Naive thymus-derived CD8-positive, alpha-beta T cell (primary cell): ENCODE measurements at regions of chr16 and their contacts with region 1.

Region 1: DNA sequence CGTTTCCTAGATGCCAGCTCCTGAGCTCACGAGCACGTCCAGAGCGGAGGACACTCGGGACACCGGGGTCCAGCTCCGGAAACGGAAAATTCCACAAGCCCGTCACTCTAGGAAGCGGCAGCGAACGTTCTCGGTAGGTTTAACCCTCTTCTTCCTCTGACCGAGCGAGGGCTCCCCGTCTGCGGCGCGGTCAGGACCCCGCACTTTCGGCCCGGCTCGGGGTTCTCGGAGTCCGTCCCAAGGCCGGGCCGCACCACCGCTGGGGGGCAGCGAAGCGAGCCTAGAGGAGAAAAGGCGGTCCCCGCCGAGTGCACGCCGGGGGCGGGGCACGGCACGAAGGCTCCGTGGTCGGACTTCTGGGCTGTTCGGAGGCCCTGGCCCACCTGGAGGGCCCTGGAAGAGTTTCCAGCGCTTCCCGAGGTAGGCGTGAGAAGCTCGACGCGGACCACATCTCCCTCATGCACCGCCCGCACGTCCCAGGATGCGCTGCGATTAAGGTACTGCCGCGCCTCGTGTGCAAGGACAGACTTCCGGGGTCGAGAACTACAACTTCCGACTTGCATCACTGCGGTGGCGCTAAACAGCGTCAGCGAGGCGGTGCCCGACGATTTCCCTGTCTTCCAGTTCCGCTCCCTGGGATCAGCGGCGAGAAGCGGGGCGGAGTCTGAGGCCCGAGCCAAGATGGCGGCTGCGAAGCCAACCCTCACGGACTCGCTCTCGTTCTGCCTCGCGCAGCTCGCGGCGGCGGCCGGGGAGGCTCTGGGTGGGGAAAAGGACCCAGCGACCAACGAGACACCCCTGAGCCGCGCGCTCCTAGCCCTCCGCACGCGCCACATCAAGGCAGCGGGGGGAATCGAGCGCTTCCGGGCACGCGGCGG is at the start of gene ARMC5:
- DNase-seq: peak; percentile 90 to 99 (median 96)
- ATAC-seq: peak; percentile 71 to 76
- H3K4me3 Mint-ChIP-seq: peak within 1 kb of the TSS; percentile 90 to 97 (median 93)
- H3K27ac Mint-ChIP-seq: peak within 1 kb of the TSS; percentile 92 to 100 (median 98)
- H3K4me1 Mint-ChIP-seq: peaks cover 16 to 54% (median 42%) of the 10 kb centered on the region in 4 donors
- H3K27me3 Mint-ChIP-seq: no peaks in the 10 kb centered on the region
- polyA plus RNA-seq, gene ARMC5: 6.2 to 9.8 (median 8.0) TPM

Region 2: DNA sequence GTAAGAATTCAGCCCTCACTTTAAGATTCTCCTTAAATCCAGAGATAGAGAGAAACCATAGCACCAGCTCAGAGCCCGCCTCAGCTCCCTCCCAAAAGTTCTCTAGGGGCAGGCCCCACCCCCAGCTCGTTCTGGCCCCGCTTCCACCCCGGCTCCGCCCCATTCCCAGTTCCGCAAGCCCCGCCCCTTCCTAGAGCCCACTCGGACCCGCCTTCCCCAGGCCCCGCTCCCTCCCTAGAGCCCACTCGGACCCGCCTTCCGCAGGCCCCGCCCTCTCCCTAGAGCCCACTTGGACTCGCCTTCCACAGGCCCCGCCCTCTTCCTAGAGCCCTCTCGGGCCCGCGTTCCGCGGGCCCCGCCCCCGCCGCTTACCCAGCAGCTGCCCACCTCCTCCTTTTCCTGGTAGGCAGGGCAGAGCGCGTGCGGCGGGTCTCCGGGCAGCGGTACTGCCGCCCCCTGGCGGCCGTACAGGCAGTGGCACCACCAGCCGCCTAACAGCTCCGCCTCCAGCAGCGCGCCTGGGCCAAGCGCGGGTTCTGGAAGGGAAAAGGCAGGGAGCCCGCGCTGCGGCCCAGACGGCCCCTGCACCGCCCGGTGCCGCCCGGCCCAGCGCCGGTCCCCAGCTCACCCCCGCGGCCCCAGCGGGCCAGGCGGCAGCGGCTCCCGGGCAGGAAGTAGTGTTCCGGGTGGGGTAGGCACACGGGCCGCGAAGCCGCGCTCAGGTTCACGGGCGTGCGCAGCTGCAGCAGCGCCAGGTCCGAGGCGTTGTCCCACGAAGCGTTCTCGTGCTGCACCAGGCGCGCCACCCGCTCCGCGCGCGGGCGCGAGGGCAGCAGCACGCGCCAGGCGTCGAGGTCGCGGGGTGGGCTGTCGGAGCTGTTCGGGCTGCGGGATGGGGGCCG is 316.7 kb before region 1 on chr16:
- POLR2A ChIA-PET with region 1: interaction called, 19 read pairs
- DNase-seq: peak; percentile 92 to 99 (median 96)
- ATAC-seq: peak; percentile 85 to 87
- H3K4me3 Mint-ChIP-seq: peak overlapping the region; percentile 52 to 82 (median 68)
- H3K27ac Mint-ChIP-seq: peak overlapping the region; percentile 8 to 95 (median 90)
- H3K4me1 Mint-ChIP-seq: peaks cover 10 to 18% (median 15%) of the 10 kb centered on the region in 4 donors
- H3K27me3 Mint-ChIP-seq: peaks cover 0 to under 1% (median 0%) of the 10 kb centered on the region in 5 donors

Region 3: DNA sequence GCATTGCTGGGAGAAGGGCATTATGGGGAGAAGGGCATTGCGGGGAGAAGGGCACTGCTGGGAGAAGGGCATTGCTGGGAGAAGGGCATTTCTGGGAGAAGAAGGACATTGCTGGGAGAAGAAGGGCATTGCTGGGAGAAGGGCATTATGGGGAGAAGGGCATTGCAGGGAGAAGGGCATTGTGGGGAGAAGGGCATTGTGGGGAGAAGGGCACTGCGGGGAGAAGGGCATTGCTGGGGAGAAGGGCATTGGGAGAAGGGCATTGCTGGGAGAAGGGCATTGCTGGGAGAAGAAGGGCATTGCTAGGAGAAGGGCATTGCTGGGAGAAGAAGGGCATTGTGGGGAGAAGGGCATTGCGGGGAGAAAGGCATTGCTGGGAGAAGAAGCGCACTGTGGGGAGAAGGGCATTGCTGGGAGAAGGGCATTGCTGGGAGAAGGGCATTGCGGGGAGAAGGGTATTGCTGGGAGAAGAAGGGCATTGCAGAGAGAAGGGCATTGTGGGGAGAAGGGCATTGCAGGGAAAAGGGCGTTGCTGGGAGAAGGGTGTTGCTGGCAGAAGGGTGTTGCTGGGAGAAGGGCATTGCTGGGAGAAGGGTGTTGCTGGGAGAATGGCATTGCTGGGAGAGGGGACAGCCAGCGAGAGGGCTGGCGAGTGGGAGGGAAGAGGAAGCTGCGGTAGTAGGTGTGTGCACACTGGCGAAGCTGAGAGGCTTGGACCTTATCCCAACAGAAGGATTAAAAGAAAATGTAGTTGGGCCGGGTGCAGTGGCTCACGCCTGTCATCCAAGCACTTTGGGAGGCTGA is 237.5 kb before region 1 on chr16:
- POLR2A ChIA-PET with region 1: no interaction called
- DNase-seq: no peak
- ATAC-seq: no peak
- H3K4me3 Mint-ChIP-seq: no peak overlapping the region
- H3K27ac Mint-ChIP-seq: no peak overlapping the region
- H3K4me1 Mint-ChIP-seq: peaks cover 5 to 9% (median 7%) of the 10 kb centered on the region in 4 donors
- H3K27me3 Mint-ChIP-seq: peaks cover 5 to 42% (median 21%) of the 10 kb centered on the region in 5 donors

Region 4: DNA sequence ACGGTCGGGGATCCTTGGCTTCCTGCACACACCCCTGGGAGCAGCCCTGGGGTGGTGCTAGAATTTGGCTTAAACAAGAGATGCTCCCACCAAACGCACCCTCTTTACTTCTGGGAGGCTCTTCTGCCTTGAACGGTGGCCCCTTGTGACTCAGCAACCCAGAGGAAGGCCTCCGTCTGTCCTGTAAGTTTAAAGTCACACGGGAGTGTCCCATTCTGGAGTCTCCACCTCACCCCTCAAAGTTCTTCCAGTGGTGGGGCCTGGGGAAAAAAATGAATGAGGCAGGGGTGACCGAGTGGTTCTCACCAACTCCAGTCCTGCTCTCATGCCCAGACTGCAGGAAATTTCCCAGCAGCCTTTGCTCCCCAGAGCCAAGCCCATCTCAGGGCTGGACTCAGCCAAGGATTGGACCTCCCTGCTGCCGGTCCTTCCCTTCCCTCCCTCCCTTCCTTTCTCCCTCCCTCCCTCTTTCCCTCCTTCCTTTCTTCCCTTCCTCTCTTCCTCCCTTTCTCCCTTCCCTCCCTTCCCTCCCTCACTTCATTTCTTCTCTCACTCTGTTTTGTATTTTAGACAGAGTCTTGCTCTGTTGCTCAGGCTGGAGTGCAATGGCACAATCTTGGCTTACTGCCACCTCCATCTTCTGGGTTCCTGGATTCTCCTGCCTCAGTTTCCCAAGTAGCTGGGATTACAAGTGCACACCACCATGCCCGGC is 54.6 kb before region 1 on chr16:
- POLR2A ChIA-PET with region 1: no interaction called
- DNase-seq: no peak
- ATAC-seq: no peak
- H3K4me3 Mint-ChIP-seq: no peak overlapping the region
- H3K27ac Mint-ChIP-seq: peak overlapping the region in 2 of 10 donors; percentile 40 to 53
- H3K4me1 Mint-ChIP-seq: peaks cover 3 to 16% (median 10%) of the 10 kb centered on the region in 4 donors
- H3K27me3 Mint-ChIP-seq: peaks cover 0 to 9% (median 2%) of the 10 kb centered on the region in 5 donors

Region 5: GRCh38 chr16:31472709-31473203 is 13.7 kb after region 1 on chr16:
- POLR2A ChIA-PET with region 1: interaction called, 51 read pairs
- DNase-seq: peak in 5 of 10 donors; percentile 20 to 63 (median 33)
- ATAC-seq: peak in 1 of 2 donors; percentile 38
- H3K4me3 Mint-ChIP-seq: peak overlapping the region in 9 of 10 donors; percentile 62 to 81 (median 77)
- H3K27ac Mint-ChIP-seq: peak overlapping the region in 3 of 10 donors; percentile 9 to 71 (median 61)
- H3K4me1 Mint-ChIP-seq: peaks cover 12 to 36% (median 25%) of the 10 kb centered on the region in 4 donors
- H3K27me3 Mint-ChIP-seq: peaks cover 1 to 19% (median 10%) of the 10 kb centered on the region in 5 donors

Region 6: DNA sequence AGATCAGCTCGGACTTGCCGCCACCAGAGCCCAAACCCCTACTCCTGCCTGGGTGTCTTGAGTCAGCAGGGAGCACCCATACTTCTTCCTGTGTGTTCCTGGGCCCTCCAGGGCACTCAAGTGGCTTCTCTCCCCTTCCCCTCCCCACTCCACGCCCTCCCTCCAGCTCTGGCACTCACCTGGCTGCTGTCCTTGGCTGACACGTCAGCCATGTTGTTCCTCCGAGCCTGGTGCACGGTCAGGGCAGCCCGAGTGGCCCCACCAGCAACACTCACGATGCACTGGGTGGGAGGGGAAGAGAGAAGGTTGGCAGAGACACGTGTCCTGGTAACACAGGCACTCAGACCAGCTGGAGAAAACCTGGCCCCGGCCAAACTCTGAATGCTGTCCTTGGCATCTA is 37.6 kb after region 1 on chr16:
- POLR2A ChIA-PET with region 1: no interaction called
- DNase-seq: no peak
- ATAC-seq: no peak
- H3K4me3 Mint-ChIP-seq: no peak overlapping the region
- H3K27ac Mint-ChIP-seq: peak overlapping the region in 1 of 10 donors; percentile 38
- H3K4me1 Mint-ChIP-seq: peaks cover 0 to 26% (median 15%) of the 10 kb centered on the region in 4 donors
- H3K27me3 Mint-ChIP-seq: no peaks in the 10 kb centered on the region

Region 7: GRCh38 chr16:31507929-31508705 is 49.0 kb after region 1 on chr16 and contains the start of gene RUSF1:
- POLR2A ChIA-PET with region 1: interaction called, 11 read pairs
- DNase-seq: peak; percentile 67 to 89 (median 78)
- ATAC-seq: peak; percentile 89 to 93
- H3K4me3 Mint-ChIP-seq: peak within 1 kb of the TSS; percentile 90 to 97 (median 92)
- H3K27ac Mint-ChIP-seq: peak within 1 kb of the TSS; percentile 93 to 98 (median 98)
- H3K4me1 Mint-ChIP-seq: peaks cover 25 to 66% (median 57%) of the 10 kb centered on the region in 4 donors
- H3K27me3 Mint-ChIP-seq: no peaks in the 10 kb centered on the region
- polyA plus RNA-seq, gene RUSF1: 15.3 to 28.6 (median 22.3) TPM

Region 8: DNA sequence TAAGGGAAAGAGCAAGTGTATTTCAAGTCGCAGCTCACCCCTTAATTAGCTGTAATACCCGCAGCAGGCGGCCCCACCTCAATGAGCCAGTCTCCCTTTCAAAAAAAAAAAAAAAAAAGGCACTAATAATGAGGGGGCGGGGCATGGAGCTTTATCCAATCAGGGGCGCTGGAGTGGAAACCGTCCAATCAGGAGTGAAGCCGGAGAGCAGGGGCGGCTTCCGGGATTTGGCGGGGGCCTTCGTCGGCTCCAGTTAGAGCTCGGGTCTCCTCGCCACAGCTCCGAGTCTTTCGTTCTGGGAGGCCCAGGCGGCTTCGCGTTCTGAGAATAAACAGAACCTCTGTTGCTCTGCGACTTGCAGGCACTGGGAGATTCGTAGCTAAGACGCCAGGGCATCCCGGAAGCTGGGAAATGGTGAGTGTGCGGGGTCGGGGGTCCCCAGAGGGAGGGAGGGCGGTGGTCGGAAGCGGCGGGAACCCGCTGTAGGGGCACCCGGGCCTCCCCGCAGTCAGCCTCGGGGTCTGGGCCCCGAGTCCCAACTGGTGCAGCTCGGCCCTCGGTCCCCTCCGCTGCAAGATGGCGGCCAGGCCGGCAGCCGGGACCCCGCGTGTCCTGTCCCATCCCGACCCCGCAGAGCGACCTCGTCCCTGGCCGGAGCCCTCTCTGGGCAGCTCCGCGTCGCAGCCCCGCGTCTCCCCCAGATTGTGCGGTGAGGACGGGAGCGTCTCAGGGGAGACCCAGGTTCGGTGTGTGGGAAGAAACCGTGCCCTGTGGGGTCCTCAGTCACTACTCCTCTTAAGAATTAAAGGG is 414.7 kb after region 1 on chr16 and contains the start of gene ZNF267:
- POLR2A ChIA-PET with region 1: interaction called, 25 read pairs
- DNase-seq: peak; percentile 84 to 98 (median 92)
- ATAC-seq: peak; percentile 72 to 73
- H3K4me3 Mint-ChIP-seq: peak within 1 kb of the TSS; percentile 94 to 100 (median 96)
- H3K27ac Mint-ChIP-seq: peak within 1 kb of the TSS; percentile 93 to 99 (median 97)
- H3K4me1 Mint-ChIP-seq: peaks cover 31 to 86% (median 78%) of the 10 kb centered on the region in 4 donors
- H3K27me3 Mint-ChIP-seq: no peaks in the 10 kb centered on the region
- polyA plus RNA-seq, gene ZNF267: 7.3 to 8.1 (median 8.0) TPM